ENCODE measurements at regions of chr15 and their contacts with region 1.

Region 1: GRCh38 chr15:57138349-57138788 is 219.9 kb downstream of the TCF12 start:
- DNase-seq: no peak
- ATAC-seq: no peak
- H3K4me3 ChIP-seq: no peak overlapping the region
- H3K27ac ChIP-seq: no peak overlapping the region
- H3K4me1 ChIP-seq: peaks cover 0 to 2% of the 10 kb centered on the region in 2 donors
- H3K27me3 ChIP-seq: no peaks in the 10 kb centered on the region

Region 2: DNA sequence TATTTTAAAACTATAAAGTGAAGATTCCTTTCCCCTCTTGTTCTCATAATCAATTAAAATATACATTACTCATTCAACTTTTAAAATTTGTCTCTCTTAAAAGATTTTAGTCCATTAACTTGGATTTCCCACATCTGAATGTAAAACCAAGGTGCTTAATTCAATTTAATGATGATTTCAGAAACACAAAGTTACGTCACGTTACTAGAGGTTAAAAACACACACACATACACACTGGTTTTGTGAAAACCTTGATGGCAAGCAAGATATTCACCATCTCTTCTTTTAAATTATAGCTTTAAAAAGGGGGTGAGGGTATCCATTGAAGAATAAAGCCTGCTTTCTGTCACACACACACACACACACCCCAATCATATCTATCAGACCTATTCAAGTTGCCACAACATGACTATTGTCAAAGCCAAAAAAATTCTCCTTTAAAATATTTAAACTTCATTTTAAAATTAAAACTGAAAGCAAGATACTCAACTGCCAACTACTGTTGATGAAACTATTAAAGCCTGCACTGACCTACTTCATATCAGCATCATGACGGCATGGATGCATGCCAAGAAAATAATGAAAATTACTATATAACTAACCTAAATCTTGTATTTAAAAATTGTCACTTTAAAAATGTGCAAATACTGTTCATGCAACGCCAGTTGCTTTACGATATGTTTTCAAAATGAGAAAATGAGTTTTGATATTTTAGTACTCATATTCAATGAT is 896.8 kb before region 1 on chr15:
- intact Hi-C with region 1: no loop called
- DNase-seq: no peak
- ATAC-seq: no peak
- H3K4me3 ChIP-seq: peak overlapping the region in 1 of 2 donors; percentile 34
- H3K27ac ChIP-seq: no peak overlapping the region
- H3K4me1 ChIP-seq: no peaks in the 10 kb centered on the region
- H3K27me3 ChIP-seq: no peaks in the 10 kb centered on the region

Region 3: GRCh38 chr15:57079931-57080620 is 58.3 kb before region 1 on chr15:
- intact Hi-C with region 1: loop called in 1 of 2 experiments (anchors 10 kb)
- DNase-seq: no peak
- ATAC-seq: no peak
- H3K4me3 ChIP-seq: no peak overlapping the region
- H3K27ac ChIP-seq: no peak overlapping the region
- H3K4me1 ChIP-seq: no peaks in the 10 kb centered on the region
- H3K27me3 ChIP-seq: no peaks in the 10 kb centered on the region

Region 4: DNA sequence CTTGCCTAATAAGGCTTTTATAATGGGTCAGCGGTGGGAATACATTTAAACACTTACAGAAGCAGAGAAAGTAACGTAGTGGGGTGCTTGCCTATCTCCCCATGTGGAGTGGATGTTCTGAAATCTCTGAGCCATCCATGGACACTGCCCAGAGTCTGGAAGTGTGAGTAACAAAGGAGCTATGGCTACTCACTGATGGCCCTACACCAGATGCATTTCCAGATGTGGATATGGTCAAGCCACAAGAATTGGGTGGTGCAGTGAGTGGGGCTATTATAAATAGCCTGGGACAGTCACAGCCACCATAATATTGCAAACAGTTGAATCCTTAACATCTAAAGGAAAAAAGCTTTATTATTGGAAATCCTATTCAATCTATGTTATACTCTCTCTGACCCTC is 334.5 kb after region 1 on chr15:
- intact Hi-C with region 1: no loop called
- DNase-seq: no peak
- ATAC-seq: no peak
- H3K4me3 ChIP-seq: no peak overlapping the region
- H3K27ac ChIP-seq: no peak overlapping the region
- H3K4me1 ChIP-seq: peaks cover 0 to 5% of the 10 kb centered on the region in 2 donors
- H3K27me3 ChIP-seq: no peaks in the 10 kb centered on the region